HEK293T (cell line): ENCODE measurements at regions of chr15 and their contacts with region 1.

Region 1: DNA sequence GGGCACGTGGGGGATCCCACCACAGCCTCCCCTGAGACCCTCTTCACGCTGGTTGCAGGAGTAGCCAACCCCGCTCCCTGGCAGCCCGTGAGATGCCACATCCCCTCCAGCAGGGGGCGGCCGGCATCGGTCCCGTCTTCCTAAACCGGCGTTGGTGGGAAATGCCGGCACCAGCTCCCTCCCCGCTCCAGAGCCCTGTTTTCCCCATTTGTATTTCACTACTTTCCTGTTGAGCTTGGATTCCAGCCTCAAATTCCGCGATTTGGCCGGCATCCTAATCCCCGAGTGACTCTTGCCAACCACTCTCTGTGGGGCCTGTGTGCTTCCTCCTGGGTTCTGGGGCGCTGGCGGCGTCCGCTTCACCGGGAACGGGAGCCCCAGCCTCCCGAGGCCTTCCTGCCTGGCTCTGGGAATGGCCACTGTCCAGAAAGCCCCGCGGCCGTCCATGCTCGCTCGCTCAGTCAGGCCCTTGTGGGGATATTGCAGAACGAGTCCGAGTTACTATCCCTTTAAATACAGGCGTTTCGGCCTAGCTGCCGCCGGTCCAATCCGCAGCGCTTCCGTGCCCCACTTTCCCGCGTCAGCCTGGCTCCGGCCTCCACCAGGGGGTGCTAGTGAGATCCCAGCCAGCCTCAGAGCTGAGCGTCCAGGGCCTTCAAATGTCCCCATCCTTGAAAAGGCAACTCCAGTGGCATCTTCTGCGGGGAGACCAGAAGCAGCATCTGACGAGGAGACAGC is 8.1 kb upstream of the ADAMTS17 start:
- DNase-seq: peak; percentile 90

Region 2: DNA sequence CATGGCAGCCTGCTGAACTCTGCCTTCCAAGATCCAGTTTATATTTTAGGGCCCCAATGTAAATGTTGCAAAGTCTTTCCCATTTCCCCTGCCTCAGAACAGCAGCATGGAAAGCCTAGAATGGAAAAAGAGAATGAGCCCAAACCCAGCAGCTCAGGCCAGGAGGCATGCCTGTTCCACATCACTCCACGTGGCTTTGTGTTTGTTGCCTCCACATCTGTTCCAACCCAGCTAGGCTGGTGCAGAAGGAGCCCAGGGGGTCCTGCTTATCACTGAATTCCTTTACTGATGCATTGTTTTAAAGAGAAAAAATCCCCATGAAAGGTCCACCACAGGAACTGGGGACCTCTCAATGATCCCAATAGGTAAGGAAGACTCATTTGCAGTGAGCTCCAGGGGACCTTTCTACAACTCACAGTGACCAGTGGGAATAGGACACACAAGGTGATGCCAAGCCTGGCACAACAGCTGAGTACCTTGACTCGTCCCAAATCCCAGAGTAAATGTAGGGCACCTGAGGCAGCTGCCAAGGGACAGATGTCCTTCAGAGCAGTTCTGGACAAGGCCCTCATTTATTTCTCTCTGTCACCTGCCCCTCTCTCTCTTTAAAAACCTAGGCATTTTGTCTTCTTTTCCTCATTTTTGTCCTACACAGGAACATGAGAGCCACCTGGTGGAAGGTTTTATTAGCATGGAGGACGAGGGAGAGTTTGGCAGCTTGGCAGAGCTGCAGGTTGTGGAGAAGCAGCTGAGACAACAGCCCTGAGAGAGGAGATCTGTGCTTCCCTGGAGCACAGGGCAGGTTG is 33.6 kb after region 1 on chr15:
- CTCF ChIA-PET with region 1: interaction called, 13 read pairs
- POLR2A ChIA-PET with region 1: no interaction called
- DNase-seq: peak; percentile 38

Region 3: DNA sequence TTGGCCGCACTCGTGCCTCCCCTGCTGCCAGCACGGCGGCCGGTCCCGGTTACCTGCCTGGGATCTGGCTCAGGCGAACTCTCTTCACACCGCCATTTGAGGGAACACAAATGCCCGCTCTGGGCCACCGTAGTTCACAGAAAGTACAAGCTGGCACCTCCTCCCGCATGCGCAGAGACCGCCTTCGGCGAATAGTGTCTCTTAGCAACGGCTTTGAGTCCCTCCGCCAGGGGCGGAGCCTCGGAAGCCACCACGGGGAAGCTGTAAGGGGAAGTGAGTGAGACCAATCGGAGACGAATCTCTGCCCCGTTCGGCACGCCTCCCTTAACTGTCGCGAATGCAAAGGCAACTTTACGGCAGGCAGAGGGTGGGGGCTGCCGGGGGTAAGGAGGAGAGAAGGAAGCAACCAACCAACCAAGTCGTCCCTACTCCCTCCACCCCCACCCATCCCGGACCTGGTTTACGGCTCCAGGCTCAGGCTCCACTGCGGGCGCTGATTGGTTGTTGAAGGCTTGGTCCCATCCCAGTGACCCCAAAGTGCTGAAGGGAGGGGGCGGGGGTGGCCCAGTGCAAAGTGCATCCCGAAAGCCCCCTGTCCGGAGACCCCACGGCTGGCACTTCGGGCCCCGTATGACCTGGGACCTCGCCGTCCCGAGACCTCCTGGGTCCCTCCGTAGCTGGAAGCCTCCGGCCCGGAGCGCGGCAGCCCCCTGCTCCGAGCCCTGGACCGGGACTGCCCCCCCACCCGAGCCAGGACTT is 252.4 kb after region 1 on chr15 and contains the starts of genes ASB7 and LINS1:
- CTCF ChIA-PET with region 1: interaction called, 4 read pairs
- POLR2A ChIA-PET with region 1: interaction called, 11 read pairs
- DNase-seq: peak; percentile 99